ENCODE measurements at regions of chr3 and their contacts with region 1.

Region 1: GRCh38 chr3:9074079-9074478 is 110.8 kb upstream of the RAD18 start:
- DNase-seq: no peak
- H3K4me3 ChIP-seq: no peak overlapping the region
- H3K27ac ChIP-seq: no peak overlapping the region
- H3K4me1 ChIP-seq: no peaks in the 10 kb centered on the region
- H3K27me3 ChIP-seq: no peaks in the 10 kb centered on the region
- CTCF ChIP-seq: no peak
- POLR2A ChIP-seq: no peak

Region 2: GRCh38 chr3:8987645-8988383 is 86.3 kb before region 1 on chr3:
- intact Hi-C with region 1: loop called (anchors 5 kb)
- DNase-seq: peak; percentile 64 to 73
- H3K4me3 ChIP-seq: no peak overlapping the region
- H3K27ac ChIP-seq: no peak overlapping the region
- H3K4me1 ChIP-seq: no peaks in the 10 kb centered on the region
- H3K27me3 ChIP-seq: no peaks in the 10 kb centered on the region
- CTCF ChIP-seq: peak; percentile 21 to 83 (median 57)
- POLR2A ChIP-seq: no peak

Measured in thyroid gland (tissue), 4 donors.